ENCODE measurements at regions of chr11 and their contacts with region 1.

Region 1: GRCh38 chr11:56841210-56841810 is 92.8 kb upstream of the OR9G4 start:
- DNase-seq: peak; percentile 7
- ATAC-seq: peak; percentile 68
- H3K4me3 ChIP-seq: no peak overlapping the region
- H3K27ac ChIP-seq: no peak overlapping the region
- H3K4me1 ChIP-seq: no peaks in the 10 kb centered on the region
- H3K27me3 ChIP-seq: no peaks in the 10 kb centered on the region
- CTCF ChIP-seq: peak; percentile 57 to 80 (median 62)
- EP300 ChIP-seq: no peak
- POLR2A ChIP-seq: no peak
- RAD21 ChIP-seq: peak; percentile 82

Region 2: DNA sequence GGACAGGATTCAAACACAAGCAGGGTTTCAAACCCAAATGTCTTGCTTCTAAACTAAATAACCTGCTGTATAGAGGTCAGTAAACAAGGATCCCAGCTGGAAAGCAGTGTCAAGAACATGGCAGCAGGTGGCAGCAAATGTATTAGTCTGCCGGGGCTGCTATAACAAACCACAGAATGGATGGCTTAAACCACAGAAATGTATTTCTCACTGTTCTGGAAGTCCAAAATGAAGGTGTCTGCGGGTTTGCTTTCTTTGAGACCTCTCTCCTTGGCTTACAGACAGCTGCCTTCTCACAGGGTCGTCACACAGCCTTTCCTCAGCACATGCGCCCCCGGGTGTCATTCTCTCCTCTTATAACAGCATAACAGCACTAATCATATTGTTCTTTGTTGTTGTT is 275.3 kb after region 1 on chr11:
- CTCF ChIA-PET with region 1: interaction called, 3 read pairs
- POLR2A ChIA-PET with region 1: no interaction called
- RAD21 ChIA-PET with region 1: interaction called, 5 read pairs
- SMC1A ChIA-PET with region 1: interaction called, 3 read pairs
- in situ Hi-C with region 1: no loop called
- intact Hi-C with region 1: loop called (anchors 10 kb)
- DNase-seq: no peak
- ATAC-seq: peak; percentile 82
- H3K4me3 ChIP-seq: no peak overlapping the region
- H3K27ac ChIP-seq: no peak overlapping the region
- H3K4me1 ChIP-seq: no peaks in the 10 kb centered on the region
- H3K27me3 ChIP-seq: no peaks in the 10 kb centered on the region; a peak in 1 of 4 replicates
- CTCF ChIP-seq: peak; percentile 50 to 59 (median 50)
- EP300 ChIP-seq: no peak
- POLR2A ChIP-seq: no peak
- RAD21 ChIP-seq: peak; percentile 56

Region 3: GRCh38 chr11:57240757-57241156 is 399.4 kb after region 1 on chr11:
- CTCF ChIA-PET with region 1: interaction called, 3 read pairs
- POLR2A ChIA-PET with region 1: no interaction called
- RAD21 ChIA-PET with region 1: no interaction called
- SMC1A ChIA-PET with region 1: interaction called, 3 read pairs
- in situ Hi-C with region 1: loop called (anchors 5 kb)
- intact Hi-C with region 1: no loop called
- DNase-seq: no peak
- ATAC-seq: no peak
- H3K4me3 ChIP-seq: no peak overlapping the region
- H3K27ac ChIP-seq: no peak overlapping the region
- H3K4me1 ChIP-seq: no peaks in the 10 kb centered on the region
- H3K27me3 ChIP-seq: peaks cover 0 to 2% of the 10 kb centered on the region in 2 experiments; a peak in 2 of 4 replicates
- CTCF ChIP-seq: no peak
- EP300 ChIP-seq: no peak
- POLR2A ChIP-seq: no peak
- RAD21 ChIP-seq: no peak

Region 4: DNA sequence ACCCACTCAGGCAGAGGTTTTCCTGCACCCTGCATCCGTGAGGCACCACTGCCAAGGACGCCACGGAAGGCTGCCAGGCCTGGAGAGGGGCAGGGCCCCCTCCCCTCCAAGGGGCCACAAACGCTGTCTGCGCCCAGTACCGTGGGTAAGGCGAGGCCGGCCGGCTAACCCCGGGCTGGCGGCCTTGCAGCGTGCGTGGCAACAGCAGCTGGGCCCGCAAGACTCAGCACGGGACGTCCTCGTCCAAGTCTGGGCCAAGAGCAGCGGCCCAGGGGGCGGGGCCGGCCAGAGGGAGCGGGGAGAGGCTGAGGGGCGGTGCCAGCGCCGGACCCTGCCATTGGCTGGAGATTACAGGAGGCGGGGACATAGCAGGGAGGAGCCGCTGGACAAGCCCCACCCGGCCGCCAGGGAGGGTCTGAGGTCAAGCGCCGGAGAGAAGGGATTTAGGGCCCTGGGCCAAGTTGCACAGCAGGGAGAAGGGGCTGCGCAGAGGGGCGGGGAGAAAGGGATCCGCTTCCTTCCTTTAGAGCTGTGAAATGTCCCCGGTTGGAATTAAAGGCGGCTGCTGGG is 658.2 kb after region 1 on chr11:
- CTCF ChIA-PET with region 1: no interaction called
- POLR2A ChIA-PET with region 1: no interaction called
- RAD21 ChIA-PET with region 1: no interaction called
- SMC1A ChIA-PET with region 1: no interaction called
- in situ Hi-C with region 1: loop called (anchors 25 kb)
- intact Hi-C with region 1: no loop called
- DNase-seq: no peak
- ATAC-seq: peak; percentile 42; the same call in 2 of the 3 replicates
- H3K4me3 ChIP-seq: no peak overlapping the region
- H3K27ac ChIP-seq: no peak overlapping the region
- H3K4me1 ChIP-seq: no peaks in the 10 kb centered on the region
- H3K27me3 ChIP-seq: no peaks in the 10 kb centered on the region
- CTCF ChIP-seq: no peak
- EP300 ChIP-seq: no peak
- POLR2A ChIP-seq: no peak
- RAD21 ChIP-seq: no peak

Measured in GM12878 (cell line).